ENCODE measurements at regions of chr16 and their contacts with region 1.

Region 1: GRCh38 chr16:3983081-3983520 is 102.6 kb upstream of the CREBBP start:
- DNase-seq: peak; percentile 81 to 93
- ATAC-seq: peak; percentile 96 to 98
- H3K4me3 ChIP-seq: no peak overlapping the region
- H3K27ac ChIP-seq: peak overlapping the region; percentile 46 to 75; a peak in 4 of 6 replicates
- H3K4me1 ChIP-seq: peaks cover 11% of the 10 kb centered on the region; the same call in 2 of the 3 replicates
- CTCF ChIP-seq: peak; percentile 91
- EP300 ChIP-seq: no peak
- POLR2A ChIP-seq: no peak
- RAD21 ChIP-seq: peak; percentile 96 to 97

Region 2: DNA sequence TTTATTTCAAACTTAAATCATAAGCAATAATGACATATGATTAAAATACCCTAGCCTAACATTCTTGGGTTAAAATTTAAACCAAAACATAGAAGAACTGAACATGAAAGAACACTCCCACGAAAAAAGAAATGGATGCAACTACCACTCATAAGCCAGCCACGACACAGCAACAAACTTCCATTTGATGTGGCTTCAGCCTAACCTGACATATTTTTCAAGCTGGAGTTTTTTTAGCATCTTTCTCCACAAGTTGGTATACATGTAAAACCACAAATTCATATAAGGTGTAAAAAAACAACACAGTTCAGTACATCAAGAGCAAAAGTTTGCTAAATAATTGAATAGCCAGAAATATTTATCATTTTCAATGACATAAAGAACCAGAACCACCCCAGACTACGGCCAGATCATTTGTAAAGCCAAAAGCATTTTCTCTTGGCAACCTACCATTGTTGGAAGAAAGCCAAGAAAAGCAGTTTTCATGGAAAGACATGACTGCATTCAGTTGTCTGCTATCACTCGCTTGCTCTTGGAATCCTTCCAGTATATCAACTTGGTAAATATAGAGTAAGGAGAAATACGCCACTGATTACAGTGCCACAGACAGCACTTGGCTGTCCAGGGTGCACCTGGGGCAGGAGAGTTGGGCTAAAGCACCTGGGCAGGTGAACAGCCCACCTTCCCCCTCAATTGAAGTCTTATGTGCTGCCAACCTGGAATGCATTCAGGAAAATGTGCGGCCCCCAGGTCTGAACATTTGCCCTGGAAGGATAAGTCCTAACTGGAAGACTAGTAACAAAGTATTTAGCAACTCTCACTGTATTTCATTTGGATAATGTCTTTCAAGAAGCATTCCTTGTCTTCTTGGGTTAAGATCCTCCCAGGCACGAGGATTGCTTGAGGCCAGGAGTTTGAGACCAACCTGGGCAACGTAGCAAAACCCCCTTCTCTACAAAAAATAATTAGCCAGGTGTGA is 163.1 kb before region 1 on chr16:
- CTCF ChIA-PET with region 1: no interaction called
- POLR2A ChIA-PET with region 1: no interaction called
- DNase-seq: peak; percentile 31 to 67
- ATAC-seq: peak; percentile 48 to 77; a peak in 3 of 6 replicates
- H3K4me3 ChIP-seq: no peak overlapping the region
- H3K27ac ChIP-seq: no peak overlapping the region
- H3K4me1 ChIP-seq: peaks cover 33% of the 10 kb centered on the region
- CTCF ChIP-seq: no peak
- EP300 ChIP-seq: no peak
- POLR2A ChIP-seq: no peak
- RAD21 ChIP-seq: no peak

Region 3: GRCh38 chr16:3961449-3961849 is 21.7 kb before region 1 on chr16:
- CTCF ChIA-PET with region 1: interaction called, 64 read pairs
- POLR2A ChIA-PET with region 1: no interaction called
- DNase-seq: peak; percentile 36 to 41
- ATAC-seq: peak; percentile 60 to 72; a peak in 4 of 6 replicates
- H3K4me3 ChIP-seq: peak overlapping the region; percentile 38
- H3K27ac ChIP-seq: peak overlapping the region; percentile 65 to 82
- H3K4me1 ChIP-seq: peaks cover 5% of the 10 kb centered on the region
- CTCF ChIP-seq: no peak
- EP300 ChIP-seq: no peak
- POLR2A ChIP-seq: no peak
- RAD21 ChIP-seq: no peak

Region 4: GRCh38 chr16:3999479-4000325 is 16.6 kb after region 1 on chr16:
- CTCF ChIA-PET with region 1: interaction called, 28 read pairs
- POLR2A ChIA-PET with region 1: no interaction called
- DNase-seq: peak in 1 of 2 experiments; percentile 29
- ATAC-seq: peak in 1 of 2 experiments; percentile 64; a peak in 3 of 6 replicates
- H3K4me3 ChIP-seq: no peak overlapping the region
- H3K27ac ChIP-seq: peak overlapping the region in 1 of 2 experiments; percentile 14; a peak in 3 of 6 replicates
- H3K4me1 ChIP-seq: peaks cover 13% of the 10 kb centered on the region
- CTCF ChIP-seq: no peak
- EP300 ChIP-seq: no peak
- POLR2A ChIP-seq: no peak
- RAD21 ChIP-seq: no peak

Region 5: GRCh38 chr16:4016658-4017057 is 33.6 kb after region 1 on chr16:
- CTCF ChIA-PET with region 1: interaction called, 10 read pairs
- POLR2A ChIA-PET with region 1: no interaction called
- DNase-seq: no peak
- ATAC-seq: no peak
- H3K4me3 ChIP-seq: no peak overlapping the region
- H3K27ac ChIP-seq: peak overlapping the region in 1 of 2 experiments; percentile 85; a peak in 3 of 6 replicates
- H3K4me1 ChIP-seq: peaks cover 69% of the 10 kb centered on the region
- CTCF ChIP-seq: no peak
- EP300 ChIP-seq: no peak
- POLR2A ChIP-seq: no peak
- RAD21 ChIP-seq: no peak

Region 6: GRCh38 chr16:4194661-4195060 is 211.6 kb after region 1 on chr16:
- CTCF ChIA-PET with region 1: interaction called, 24 read pairs
- POLR2A ChIA-PET with region 1: no interaction called
- DNase-seq: no peak
- ATAC-seq: no peak
- H3K4me3 ChIP-seq: no peak overlapping the region
- H3K27ac ChIP-seq: no peak overlapping the region
- H3K4me1 ChIP-seq: no peaks in the 10 kb centered on the region
- CTCF ChIP-seq: no peak
- EP300 ChIP-seq: no peak
- POLR2A ChIP-seq: no peak
- RAD21 ChIP-seq: no peak

Region 7: DNA sequence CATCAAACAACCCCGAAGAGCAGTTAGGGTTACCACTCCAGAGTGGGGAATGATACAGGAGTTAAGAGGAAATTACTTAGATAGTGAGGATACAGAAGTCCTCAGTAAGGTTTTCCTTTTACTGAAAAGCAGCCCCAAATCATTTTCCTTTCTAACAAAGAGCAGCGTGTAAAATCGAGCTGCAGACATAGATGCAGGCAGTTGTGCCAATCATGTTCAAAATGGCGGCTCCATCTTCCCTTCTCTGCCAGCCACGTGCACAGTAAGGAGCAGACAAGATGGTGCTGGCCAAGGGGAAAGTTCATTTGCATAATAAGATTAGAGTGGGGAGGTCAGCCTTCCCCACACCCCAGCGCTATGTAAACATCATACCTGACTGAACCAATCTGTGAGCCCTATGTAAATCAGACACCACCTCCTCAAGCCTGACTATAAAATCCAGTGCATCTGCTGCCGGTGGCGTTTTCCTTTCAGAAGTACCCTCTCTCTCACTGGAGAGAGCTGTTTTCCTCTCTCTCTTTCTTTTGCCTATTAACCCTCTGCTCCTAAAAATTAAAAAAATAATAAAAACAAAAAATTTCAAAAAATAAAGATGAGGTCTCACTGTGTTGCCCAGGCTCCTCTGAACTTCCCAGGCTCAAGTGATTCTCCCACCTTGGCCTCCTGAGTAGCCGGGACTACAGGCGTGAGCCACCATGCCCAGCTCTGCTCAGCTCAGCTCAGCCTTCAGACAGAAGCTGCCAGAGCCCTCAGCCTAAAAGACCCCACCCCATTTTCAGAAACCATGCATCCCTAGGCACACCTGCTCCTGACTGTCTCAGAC is 261.4 kb after region 1 on chr16:
- CTCF ChIA-PET with region 1: interaction called, 11 read pairs
- POLR2A ChIA-PET with region 1: no interaction called
- DNase-seq: no peak
- ATAC-seq: no peak
- H3K4me3 ChIP-seq: no peak overlapping the region
- H3K27ac ChIP-seq: no peak overlapping the region
- H3K4me1 ChIP-seq: no peaks in the 10 kb centered on the region
- CTCF ChIP-seq: no peak
- EP300 ChIP-seq: no peak
- POLR2A ChIP-seq: no peak
- RAD21 ChIP-seq: no peak

Measured in A549 (cell line).